PC-3 (cell line): ENCODE measurements at regions of chr1 and their contacts with region 1.

Region 1: DNA sequence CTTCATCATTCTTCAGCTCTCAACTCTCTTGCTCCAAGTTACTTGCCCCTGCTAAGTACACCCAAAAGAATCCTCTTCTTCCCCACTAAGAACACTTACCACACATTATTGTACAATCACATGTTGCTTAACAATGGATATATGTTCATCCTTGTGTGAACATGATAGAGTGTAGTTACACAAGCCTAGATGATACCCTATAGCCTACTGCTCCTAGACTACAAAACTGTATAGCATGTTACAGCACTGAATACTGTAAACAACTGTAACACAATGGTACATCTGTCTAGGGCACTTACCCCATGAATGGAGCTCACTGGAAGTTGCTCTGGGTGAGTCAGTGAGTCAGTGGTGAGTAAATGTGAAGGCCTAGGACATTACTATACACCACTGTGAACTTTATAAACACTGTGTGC is 77.4 kb downstream of the RERE start:
- DNase-seq: peak; percentile 90
- ATAC-seq: peak; percentile 95
- H3K4me3 ChIP-seq: no peak overlapping the region
- H3K27ac ChIP-seq: peak overlapping the region; percentile 89
- H3K4me1 ChIP-seq: peaks cover 30% of the 10 kb centered on the region
- H3K27me3 ChIP-seq: no peaks in the 10 kb centered on the region
- CTCF ChIP-seq: no peak

Region 2: DNA sequence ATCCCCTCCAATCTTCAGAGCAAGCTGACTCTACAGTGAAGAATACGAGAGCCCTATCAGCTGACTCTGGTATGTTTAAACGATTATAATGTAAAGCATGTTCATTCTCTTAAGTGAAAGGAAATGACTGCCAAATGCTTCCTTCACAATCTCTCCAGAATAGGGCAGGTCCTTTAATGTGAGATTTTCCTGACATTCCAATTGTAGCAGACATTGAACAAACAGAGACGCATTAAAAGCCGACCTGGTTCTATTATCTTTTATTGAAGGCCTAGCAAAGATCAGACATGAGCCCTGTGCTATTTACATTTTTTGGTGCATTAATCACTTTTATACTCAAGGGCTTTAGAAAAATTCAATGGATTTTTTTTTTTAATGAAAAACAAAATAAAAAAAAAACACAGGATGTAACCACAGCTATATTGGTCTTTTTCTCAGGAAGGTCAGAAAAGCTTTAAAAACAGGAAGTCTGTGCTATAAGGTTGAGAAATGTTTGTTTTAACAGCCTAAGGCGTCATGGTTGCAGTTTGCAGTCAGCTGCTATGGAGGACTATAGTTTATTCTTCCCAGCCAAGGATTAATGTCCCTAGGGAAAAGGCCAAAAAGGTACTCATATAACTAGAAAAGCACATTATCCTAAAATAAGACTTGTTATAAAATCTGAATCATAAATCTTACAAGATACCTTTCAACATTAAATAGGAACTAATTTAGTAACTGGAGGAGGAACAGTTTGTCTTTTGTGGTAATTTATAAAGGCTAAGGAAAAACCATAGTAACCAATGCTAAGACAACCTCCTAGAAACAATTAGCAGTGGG is 27.4 kb before region 1 on chr1:
- CTCF ChIA-PET with region 1: no interaction called
- POLR2A ChIA-PET with region 1: no interaction called
- intact Hi-C with region 1: loop called (anchors 2 kb)
- DNase-seq: peak; percentile 88
- ATAC-seq: peak; percentile 83
- H3K4me3 ChIP-seq: peak overlapping the region; percentile 33
- H3K27ac ChIP-seq: peak overlapping the region; percentile 81
- H3K4me1 ChIP-seq: peaks cover 34% of the 10 kb centered on the region
- H3K27me3 ChIP-seq: no peaks in the 10 kb centered on the region
- CTCF ChIP-seq: no peak

Region 3: GRCh38 chr1:8723010-8723409 is 17.0 kb before region 1 on chr1:
- CTCF ChIA-PET with region 1: no interaction called
- POLR2A ChIA-PET with region 1: no interaction called
- intact Hi-C with region 1: no loop called
- DNase-seq: no peak
- ATAC-seq: no peak
- H3K4me3 ChIP-seq: no peak overlapping the region
- H3K27ac ChIP-seq: no peak overlapping the region
- H3K4me1 ChIP-seq: 0 out of 2 replicates have a peak, but pooled peaks cover 4% of the 10 kb centered on the region
- H3K27me3 ChIP-seq: no peaks in the 10 kb centered on the region
- CTCF ChIP-seq: no peak

Region 4: DNA sequence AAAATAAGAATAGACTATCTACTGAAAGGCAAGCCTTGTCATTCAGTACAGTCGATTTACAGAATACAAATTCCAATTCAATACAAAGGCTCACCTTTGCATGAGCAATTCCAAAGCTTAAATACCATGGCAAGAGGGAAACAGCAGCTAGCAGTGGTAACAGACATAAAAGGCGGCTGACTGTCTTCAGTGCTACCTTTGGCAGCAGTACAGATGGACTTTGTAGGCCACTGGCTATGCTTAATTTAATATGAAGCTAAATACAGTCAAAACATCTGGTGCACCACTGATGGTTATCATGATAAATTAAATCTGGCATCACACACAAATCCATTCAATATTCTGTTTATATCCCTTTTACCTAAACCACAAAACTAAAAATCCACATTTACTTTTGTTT is 15.0 kb after region 1 on chr1:
- CTCF ChIA-PET with region 1: no interaction called
- POLR2A ChIA-PET with region 1: interaction called, 15 read pairs
- intact Hi-C with region 1: no loop called
- DNase-seq: no peak
- ATAC-seq: no peak
- H3K4me3 ChIP-seq: no peak overlapping the region
- H3K27ac ChIP-seq: no peak overlapping the region
- H3K4me1 ChIP-seq: no peaks in the 10 kb centered on the region
- H3K27me3 ChIP-seq: no peaks in the 10 kb centered on the region
- CTCF ChIP-seq: no peak

Region 5: GRCh38 chr1:8776104-8776503 is 36.1 kb after region 1 on chr1:
- CTCF ChIA-PET with region 1: no interaction called
- POLR2A ChIA-PET with region 1: no interaction called
- intact Hi-C with region 1: no loop called
- DNase-seq: no peak
- ATAC-seq: no peak
- H3K4me3 ChIP-seq: no peak overlapping the region
- H3K27ac ChIP-seq: no peak overlapping the region
- H3K4me1 ChIP-seq: peaks cover 11% of the 10 kb centered on the region
- H3K27me3 ChIP-seq: no peaks in the 10 kb centered on the region
- CTCF ChIP-seq: no peak

Region 6: GRCh38 chr1:8789314-8790214 is 49.5 kb after region 1 on chr1:
- CTCF ChIA-PET with region 1: no interaction called
- POLR2A ChIA-PET with region 1: interaction called, 5 read pairs
- intact Hi-C with region 1: loop called (anchors 1 kb)
- DNase-seq: peak; percentile 79
- ATAC-seq: peak; percentile 19
- H3K4me3 ChIP-seq: peak overlapping the region; percentile 2; the same call in 1 of the 2 replicates
- H3K27ac ChIP-seq: peak overlapping the region; percentile 64
- H3K4me1 ChIP-seq: peaks cover 39% of the 10 kb centered on the region
- H3K27me3 ChIP-seq: no peaks in the 10 kb centered on the region
- CTCF ChIP-seq: no peak

Region 7: DNA sequence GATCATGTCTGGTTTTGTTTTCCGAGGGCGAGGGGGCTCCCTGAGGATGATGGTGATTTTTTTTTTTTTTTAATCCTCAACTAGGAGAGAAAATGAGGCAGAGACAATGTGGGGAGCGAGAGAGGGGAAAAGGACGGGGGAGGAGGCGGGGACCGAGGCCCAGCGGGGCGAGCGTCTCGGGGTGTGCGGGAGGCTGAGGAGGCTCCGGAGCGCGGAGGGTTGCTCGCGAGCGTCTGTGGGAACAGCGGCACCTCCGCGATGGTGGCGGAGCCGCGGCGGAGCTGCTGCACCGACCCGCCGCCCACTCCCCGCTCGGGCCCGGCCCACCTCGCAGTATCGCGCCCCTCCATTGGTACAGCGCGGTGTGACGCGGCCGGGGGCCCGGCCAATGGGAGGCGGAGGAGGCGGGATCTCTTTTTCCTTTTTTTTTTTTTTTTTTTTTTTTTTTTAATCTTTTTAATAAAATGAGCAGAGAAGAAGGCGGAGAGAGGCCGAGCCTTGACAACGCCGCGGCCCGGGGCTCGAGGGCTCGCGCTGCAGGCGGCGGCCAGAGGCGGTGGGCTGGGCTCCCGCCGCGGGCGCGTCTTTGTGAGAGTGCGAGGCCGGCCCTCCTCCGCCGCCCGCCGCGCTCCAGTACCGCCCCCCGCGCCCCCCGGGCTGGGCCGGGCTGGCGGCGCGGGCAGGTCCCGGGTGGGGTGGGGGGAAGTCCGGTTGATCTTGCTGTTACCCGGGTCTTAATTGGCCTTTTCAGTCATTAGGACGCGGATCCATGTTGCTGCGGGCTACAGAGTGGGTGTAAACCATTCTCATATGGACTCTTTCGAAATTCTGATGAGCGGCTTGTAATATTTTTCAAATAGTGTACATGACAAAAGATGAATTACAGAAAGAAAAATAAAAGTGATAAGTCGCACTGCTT is 77.6 kb after region 1 on chr1 and contains the start of gene RERE:
- CTCF ChIA-PET with region 1: no interaction called
- POLR2A ChIA-PET with region 1: no interaction called
- intact Hi-C with region 1: loop called (anchors 2 kb)
- DNase-seq: peak; percentile 95
- ATAC-seq: peak; percentile 75
- H3K4me3 ChIP-seq: peak within 1 kb of the TSS; percentile 96
- H3K27ac ChIP-seq: peak within 1 kb of the TSS; percentile 74
- H3K4me1 ChIP-seq: peaks cover 55% of the 10 kb centered on the region
- H3K27me3 ChIP-seq: no peaks in the 10 kb centered on the region
- CTCF ChIP-seq: no peak
- total RNA-seq, gene RERE: 24.2 and 45.2 TPM in 2 replicates

Region 8: DNA sequence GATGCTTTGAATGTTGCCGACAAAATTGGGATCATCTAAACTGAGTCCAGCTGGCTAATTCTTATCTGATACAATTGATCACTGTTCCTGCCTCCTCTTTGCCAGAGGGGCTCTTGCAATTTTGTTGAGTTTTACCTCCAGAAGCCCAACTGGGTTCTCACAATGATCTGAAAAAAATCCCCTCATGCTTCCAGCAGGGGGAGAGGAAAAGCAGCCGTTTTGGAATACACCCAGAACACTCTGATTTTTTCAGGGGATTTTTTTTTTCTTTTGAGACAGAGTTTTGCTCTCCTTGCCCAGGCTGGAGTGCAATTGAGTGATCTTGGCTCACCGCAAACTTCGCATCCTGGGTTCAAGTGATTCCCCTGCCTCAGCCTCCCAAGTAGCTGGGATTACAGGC is 91.3 kb after region 1 on chr1:
- CTCF ChIA-PET with region 1: interaction called, 10 read pairs
- POLR2A ChIA-PET with region 1: no interaction called
- intact Hi-C with region 1: no loop called
- DNase-seq: no peak
- ATAC-seq: no peak
- H3K4me3 ChIP-seq: no peak overlapping the region
- H3K27ac ChIP-seq: no peak overlapping the region
- H3K4me1 ChIP-seq: peaks cover 8% of the 10 kb centered on the region; the same call in 1 of the 2 replicates
- H3K27me3 ChIP-seq: no peaks in the 10 kb centered on the region
- CTCF ChIP-seq: peak; percentile 42; the same call in 1 of the 2 replicates

Region 9: DNA sequence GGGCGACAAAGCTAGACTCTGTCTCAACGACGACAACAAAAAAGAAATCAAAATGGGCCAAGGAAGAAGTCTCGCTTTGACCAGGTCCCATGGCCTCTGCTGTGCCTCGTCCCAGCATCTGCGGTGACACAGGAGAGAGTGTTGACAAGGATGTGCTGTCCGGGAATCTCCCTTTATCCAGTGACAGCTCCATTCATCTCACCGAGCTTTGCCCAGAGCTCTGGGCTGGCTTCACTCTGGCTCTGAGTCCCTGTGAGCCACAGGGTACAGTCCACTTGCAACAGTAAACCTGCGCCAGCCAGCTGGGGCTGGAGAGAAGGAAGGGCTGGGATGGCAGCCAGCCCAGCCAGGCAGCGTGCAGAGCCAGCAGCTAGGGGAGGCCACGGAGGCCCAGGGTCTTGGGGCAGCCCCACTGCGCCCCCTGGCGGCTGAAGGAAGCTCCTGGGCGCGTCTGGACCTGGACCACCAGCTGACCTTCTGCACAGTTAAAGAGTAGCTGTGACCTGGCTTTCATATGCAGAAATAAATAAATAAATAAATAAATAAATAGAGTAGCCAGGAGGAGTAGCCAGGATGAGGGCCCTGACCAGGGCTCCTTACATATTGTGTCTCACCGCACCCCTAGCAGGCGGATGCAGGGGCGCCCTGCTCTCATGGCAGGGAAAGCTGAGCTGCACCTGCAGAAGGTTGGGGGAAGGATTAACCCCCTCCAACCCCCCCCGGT is 108.8 kb after region 1 on chr1:
- CTCF ChIA-PET with region 1: interaction called, 10 read pairs
- POLR2A ChIA-PET with region 1: interaction called, 4 read pairs
- intact Hi-C with region 1: loop called (anchors 5 kb)
- DNase-seq: peak; percentile 91
- ATAC-seq: peak; percentile 98
- H3K4me3 ChIP-seq: no peak overlapping the region
- H3K27ac ChIP-seq: no peak overlapping the region
- H3K4me1 ChIP-seq: peaks cover 5% of the 10 kb centered on the region
- H3K27me3 ChIP-seq: no peaks in the 10 kb centered on the region
- CTCF ChIP-seq: peak; percentile 73